CD4-positive, alpha-beta T cell (primary cell): ENCODE measurements at regions of chr11 and their contacts with region 1.

Region 1: DNA sequence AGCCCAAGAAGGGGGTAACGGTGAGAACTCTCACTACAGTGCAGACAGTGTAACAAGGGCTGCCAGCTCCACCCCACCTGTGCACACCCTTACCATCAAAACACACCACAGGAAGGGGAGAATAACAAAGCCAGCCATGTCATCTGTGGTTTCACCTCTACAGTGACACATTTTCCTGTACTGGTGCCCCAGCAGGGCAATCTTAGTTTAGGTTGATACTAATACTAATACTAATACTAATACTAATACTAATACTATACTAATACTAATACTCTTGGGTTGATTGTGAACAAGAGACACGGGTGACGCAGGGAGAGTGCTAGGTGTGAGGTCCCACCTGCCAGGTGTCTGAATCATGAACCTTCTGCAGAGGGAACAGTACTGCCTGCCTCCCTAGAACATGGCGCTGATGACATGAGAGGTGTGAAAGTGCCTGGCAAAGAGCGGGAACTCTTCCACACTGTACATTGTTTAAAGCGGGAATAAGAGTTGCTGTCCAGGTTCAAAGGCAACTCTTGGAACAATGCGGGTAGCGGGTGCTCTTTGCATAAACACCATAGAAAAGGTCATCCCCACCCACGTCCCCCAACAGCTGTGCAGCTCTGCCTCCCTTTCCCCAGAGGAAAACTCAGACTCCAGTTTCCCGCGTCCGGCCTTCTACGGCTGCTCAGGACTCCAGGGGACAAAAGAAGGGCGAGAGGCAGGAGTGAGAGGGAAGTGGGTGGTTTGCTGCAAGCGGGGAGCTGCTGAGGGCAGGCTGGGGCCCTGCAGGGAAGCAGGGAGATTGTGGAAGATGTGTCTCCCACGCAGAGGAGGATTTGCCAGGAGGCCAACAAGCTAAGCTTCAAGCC is 25.0 kb upstream of the TMPRSS4 start:
- DNase-seq: peak; percentile 63 to 94 (median 74)
- ATAC-seq: peak; percentile 95
- H3K4me3 ChIP-seq: no peak overlapping the region
- H3K4me3 Mint-ChIP-seq: peak overlapping the region; percentile 81
- H3K27ac ChIP-seq: peak overlapping the region; percentile 48 to 68
- H3K27ac Mint-ChIP-seq: peak overlapping the region; percentile 95
- H3K4me1 ChIP-seq: peaks cover 66% of the 10 kb centered on the region
- H3K4me1 Mint-ChIP-seq: peaks cover 65% of the 10 kb centered on the region
- H3K27me3 ChIP-seq: no peaks in the 10 kb centered on the region
- H3K27me3 Mint-ChIP-seq: no peaks in the 10 kb centered on the region
- CTCF ChIP-seq: no peak

Region 2: DNA sequence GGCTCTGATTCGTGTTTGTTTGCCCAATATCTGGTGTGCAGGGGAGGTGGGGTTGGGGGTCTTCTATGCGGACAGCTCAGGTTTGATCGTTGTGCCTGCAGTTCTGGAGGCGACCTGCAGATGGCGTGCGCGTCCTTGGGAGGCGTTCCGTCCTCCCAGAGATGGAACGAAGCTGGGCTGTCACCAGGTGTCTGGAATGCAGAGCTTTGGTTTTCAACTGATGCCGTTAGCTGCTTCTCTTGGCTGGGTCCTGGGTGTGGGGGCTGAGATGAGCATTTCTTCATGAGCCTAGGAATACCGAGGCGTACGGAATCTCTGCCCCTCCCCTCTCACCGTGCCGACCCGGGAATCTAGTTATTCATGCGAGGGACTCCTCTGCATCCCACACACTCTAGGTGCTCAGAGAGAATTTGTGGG is 625.6 kb before region 1 on chr11:
- CTCF ChIA-PET with region 1: interaction called, 4 read pairs
- POLR2A ChIA-PET with region 1: interaction called, 4 read pairs
- intact Hi-C with region 1: loop called in 1 of 2 experiments (anchors 1 kb)
- DNase-seq: peak; percentile 50 to 74 (median 61)
- ATAC-seq: peak; percentile 48
- H3K4me3 ChIP-seq: no peak overlapping the region
- H3K4me3 Mint-ChIP-seq: no peak overlapping the region
- H3K27ac ChIP-seq: no peak overlapping the region
- H3K27ac Mint-ChIP-seq: no peak overlapping the region
- H3K4me1 ChIP-seq: peaks cover 8% of the 10 kb centered on the region
- H3K4me1 Mint-ChIP-seq: peaks cover 5% of the 10 kb centered on the region
- H3K27me3 ChIP-seq: no peaks in the 10 kb centered on the region
- H3K27me3 Mint-ChIP-seq: no peaks in the 10 kb centered on the region
- CTCF ChIP-seq: peak; percentile 92

Region 3: DNA sequence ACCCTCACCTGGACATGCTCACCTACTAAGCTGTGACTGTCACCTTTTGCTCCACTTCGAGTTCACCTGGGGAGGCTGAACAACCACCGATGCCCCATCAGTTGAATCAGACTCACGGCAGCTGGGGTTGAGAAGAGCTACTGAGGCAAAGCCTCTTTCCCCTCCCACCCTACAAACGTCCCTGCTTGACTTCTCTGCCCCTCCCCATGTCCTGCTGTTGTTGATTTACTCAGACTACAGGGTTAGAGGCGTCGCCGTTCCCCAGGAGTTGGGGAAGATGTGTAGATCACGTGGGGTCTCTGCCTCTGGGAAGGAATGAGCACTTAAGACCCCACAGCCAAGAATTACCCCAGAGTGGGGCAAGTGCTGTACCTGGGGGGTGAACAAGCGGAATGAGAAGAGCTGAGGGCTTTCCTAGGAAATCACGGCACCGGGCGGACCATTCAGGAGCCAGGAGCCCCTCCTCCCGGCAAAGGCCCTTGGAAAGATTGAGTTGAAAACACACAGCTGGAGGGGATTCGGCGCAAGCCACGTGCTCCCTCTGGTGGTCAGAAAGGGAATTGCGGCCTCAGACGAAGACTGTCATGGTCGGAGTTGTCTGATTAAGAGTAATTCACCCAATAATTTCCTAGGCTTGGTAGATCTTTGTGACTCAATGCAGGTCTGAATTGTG is 234.3 kb before region 1 on chr11:
- CTCF ChIA-PET with region 1: interaction called, 12 read pairs
- POLR2A ChIA-PET with region 1: interaction called, 6 read pairs
- intact Hi-C with region 1: loop called (anchors 2 kb)
- DNase-seq: peak; percentile 70 to 92 (median 84)
- ATAC-seq: peak; percentile 16
- H3K4me3 ChIP-seq: no peak overlapping the region
- H3K4me3 Mint-ChIP-seq: peak overlapping the region; percentile 38
- H3K27ac ChIP-seq: no peak overlapping the region
- H3K27ac Mint-ChIP-seq: peak overlapping the region; percentile 87
- H3K4me1 ChIP-seq: peaks cover 67% of the 10 kb centered on the region
- H3K4me1 Mint-ChIP-seq: peaks cover 50% of the 10 kb centered on the region
- H3K27me3 ChIP-seq: no peaks in the 10 kb centered on the region
- H3K27me3 Mint-ChIP-seq: no peaks in the 10 kb centered on the region
- CTCF ChIP-seq: peak; percentile 97

Region 4: DNA sequence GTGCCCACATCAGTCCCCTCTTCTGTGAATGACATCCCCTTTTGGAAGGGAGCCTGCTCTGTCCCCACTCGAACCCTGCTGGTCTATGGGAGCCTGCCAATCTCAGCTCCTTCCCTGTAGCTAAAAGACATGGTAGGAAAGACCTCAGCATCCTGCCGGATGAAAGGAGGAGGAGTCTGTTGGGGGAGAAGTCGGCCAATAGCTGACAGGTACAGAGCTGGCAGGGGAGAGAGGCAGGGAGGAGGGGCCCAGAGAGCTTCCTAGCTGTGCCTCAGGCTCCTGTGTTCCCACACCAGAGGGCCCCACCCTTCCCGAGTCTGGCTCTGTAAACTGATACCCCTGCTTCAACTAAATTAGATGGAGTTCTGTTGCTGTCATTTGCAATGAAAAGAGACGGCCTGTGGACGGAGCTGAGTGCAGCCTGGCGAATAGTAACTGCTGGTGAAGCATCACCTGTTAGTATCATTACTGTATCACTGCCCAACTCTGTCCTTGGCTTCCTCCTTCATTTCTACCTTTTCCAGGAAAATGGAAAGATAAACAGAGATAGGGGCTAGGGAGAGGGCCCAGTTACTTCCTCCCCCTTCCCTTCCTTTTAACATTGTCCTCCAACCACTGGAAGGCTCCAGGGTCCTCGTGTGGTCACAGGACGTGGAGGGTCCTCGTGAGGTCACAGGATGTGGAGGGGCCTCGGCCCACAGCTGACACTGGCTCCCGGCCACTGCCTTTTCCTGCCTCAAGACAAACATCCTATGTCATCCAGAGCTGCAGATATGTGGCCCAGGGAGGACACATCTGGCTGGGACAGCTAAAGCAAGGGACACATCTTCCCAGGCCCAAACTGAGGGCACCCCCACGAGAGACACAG is 190.5 kb before region 1 on chr11:
- CTCF ChIA-PET with region 1: no interaction called
- POLR2A ChIA-PET with region 1: no interaction called
- intact Hi-C with region 1: no loop called
- DNase-seq: no peak
- ATAC-seq: no peak
- H3K4me3 ChIP-seq: no peak overlapping the region
- H3K4me3 Mint-ChIP-seq: no peak overlapping the region
- H3K27ac ChIP-seq: no peak overlapping the region
- H3K27ac Mint-ChIP-seq: no peak overlapping the region
- H3K4me1 ChIP-seq: peaks cover 7% of the 10 kb centered on the region
- H3K4me1 Mint-ChIP-seq: no peaks in the 10 kb centered on the region
- H3K27me3 ChIP-seq: no peaks in the 10 kb centered on the region
- H3K27me3 Mint-ChIP-seq: peaks cover 4% of the 10 kb centered on the region
- CTCF ChIP-seq: no peak

Region 5: DNA sequence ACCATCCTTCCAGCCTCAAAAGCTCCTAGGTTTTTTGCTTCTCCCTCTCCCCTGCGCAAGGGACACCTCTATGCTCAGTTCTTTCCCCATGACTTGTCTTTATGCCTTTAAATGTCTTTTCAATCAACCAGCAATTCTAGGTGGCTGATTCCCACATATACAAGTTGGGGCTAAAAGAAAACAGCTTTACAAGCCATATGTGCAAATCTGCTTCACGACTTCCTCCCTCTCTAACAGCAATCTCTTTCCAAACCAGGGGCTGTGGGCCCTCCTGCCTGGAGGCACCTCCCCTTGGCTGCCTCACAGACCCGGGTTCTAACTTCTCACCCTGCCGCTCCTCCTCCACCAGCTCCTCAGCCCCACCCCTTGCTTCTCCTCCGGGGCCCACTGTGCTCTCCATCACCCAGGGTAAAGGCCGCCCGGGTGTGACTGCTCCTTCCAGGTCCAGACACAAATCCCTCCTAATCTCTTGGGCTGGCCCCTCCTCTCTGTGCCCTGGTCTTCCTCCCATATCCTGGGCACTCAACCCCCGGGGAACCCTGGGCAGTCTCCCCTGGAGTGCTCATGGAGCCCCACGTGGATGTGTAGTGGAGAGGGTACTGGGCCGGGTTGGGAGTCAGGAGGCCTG is 136.7 kb before region 1 on chr11:
- CTCF ChIA-PET with region 1: no interaction called
- POLR2A ChIA-PET with region 1: no interaction called
- intact Hi-C with region 1: no loop called
- DNase-seq: peak in 1 of 14 experiments; percentile 22
- ATAC-seq: no peak
- H3K4me3 ChIP-seq: no peak overlapping the region
- H3K4me3 Mint-ChIP-seq: no peak overlapping the region
- H3K27ac ChIP-seq: no peak overlapping the region
- H3K27ac Mint-ChIP-seq: no peak overlapping the region
- H3K4me1 ChIP-seq: no peaks in the 10 kb centered on the region
- H3K4me1 Mint-ChIP-seq: no peaks in the 10 kb centered on the region
- H3K27me3 ChIP-seq: no peaks in the 10 kb centered on the region
- H3K27me3 Mint-ChIP-seq: no peaks in the 10 kb centered on the region
- CTCF ChIP-seq: no peak

Region 6: DNA sequence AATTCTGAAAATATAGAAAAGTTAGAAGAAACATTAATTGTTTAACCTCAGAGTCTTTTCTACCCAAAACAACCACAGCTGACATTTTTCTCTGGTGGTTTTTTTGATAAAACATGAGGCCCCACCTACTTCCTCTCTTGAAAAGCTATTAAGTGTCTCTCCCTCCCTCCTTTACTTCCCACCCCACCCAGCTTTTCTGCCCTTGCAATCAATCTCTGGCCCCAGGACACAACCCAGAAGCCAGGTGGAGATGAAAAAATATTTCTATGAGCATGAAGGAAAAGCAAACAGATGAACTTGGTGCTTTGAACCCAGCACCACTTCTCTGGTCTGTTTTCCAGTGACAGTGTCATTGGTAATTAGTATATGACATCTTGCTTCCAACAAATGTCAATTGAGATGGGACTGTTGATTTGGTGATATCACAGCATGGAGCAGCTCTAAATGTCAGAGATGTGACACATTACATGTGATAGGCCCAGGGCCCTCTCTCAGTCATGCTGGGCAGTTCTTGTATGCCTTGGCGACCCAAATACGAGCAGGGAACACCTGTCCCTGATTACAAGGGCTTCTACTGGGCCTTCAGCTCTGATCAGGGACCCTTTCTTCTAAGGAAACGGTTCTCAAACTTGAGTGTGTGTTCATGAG is 98.7 kb before region 1 on chr11:
- CTCF ChIA-PET with region 1: interaction called, 78 read pairs
- POLR2A ChIA-PET with region 1: interaction called, 156 read pairs
- intact Hi-C with region 1: loop called in 1 of 2 experiments (anchors 1 kb)
- DNase-seq: peak in 8 of 14 experiments; percentile 25 to 88 (median 46)
- ATAC-seq: peak; percentile 33
- H3K4me3 ChIP-seq: peak overlapping the region; percentile 13
- H3K4me3 Mint-ChIP-seq: peak overlapping the region; percentile 85
- H3K27ac ChIP-seq: peak overlapping the region in 1 of 2 donors; percentile 13
- H3K27ac Mint-ChIP-seq: peak overlapping the region; percentile 90
- H3K4me1 ChIP-seq: peaks cover 65% of the 10 kb centered on the region
- H3K4me1 Mint-ChIP-seq: peaks cover 95% of the 10 kb centered on the region
- H3K27me3 ChIP-seq: no peaks in the 10 kb centered on the region
- H3K27me3 Mint-ChIP-seq: no peaks in the 10 kb centered on the region
- CTCF ChIP-seq: no peak

Region 7: DNA sequence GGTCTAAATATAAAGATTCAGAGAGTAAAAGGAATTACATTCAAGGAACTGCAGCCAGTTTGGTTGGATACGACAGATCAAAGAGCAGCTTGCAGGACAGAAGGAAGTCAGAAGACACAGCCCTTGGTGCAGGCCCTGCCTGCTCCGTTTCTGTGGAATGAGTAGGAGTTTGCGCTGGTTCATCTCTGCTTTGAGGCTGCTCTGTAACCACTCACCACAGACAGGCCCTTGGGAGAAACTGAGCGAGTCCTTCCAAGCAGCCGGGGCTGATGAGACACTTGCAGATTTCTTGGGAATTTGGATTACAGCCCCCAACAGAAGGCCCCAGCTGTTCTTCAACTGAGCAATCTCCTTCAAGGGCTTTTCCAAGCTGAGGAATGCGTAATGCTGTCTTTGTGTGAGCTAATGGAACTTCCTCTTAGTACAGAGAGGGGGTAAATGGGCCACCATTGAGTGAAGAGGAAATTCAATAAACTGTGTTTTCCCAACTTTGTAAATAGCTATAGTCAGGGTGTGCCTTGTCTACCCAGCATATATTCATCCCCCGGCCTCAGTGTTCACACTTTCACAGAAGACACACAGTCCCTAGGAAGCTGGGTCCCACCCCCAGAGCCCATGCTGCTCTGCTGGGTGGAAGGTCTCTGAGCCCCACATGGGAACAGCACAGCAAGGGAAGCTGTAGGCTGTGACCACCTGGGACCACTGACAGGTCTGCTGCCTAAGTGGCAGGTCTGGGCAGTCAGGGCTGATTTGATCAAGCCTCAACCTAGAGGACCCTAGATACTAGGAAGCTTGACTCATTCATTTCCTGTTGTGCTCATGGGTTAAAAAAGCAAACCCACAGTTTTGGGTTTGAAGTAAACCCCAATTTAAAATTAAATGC is 49.1 kb before region 1 on chr11:
- CTCF ChIA-PET with region 1: interaction called, 5 read pairs
- POLR2A ChIA-PET with region 1: interaction called, 132 read pairs
- intact Hi-C with region 1: loop called (anchors 2 to 5 kb)
- DNase-seq: peak in 10 of 14 experiments; percentile 29 to 70 (median 48)
- ATAC-seq: peak; percentile 48
- H3K4me3 ChIP-seq: peak overlapping the region; percentile 10
- H3K4me3 Mint-ChIP-seq: peak overlapping the region; percentile 82
- H3K27ac ChIP-seq: peak overlapping the region; percentile 72 to 76
- H3K27ac Mint-ChIP-seq: peak overlapping the region; percentile 84
- H3K4me1 ChIP-seq: peaks cover 99% of the 10 kb centered on the region
- H3K4me1 Mint-ChIP-seq: peaks cover 92% of the 10 kb centered on the region
- H3K27me3 ChIP-seq: no peaks in the 10 kb centered on the region
- H3K27me3 Mint-ChIP-seq: no peaks in the 10 kb centered on the region
- CTCF ChIP-seq: no peak